Dorsolateral prefrontal cortex (tissue), 120 donors: ENCODE measurements at regions of chr12 and their contacts with region 1.

Region 1: GRCh38 chr12:32679091-32679919 is at the start of gene DNM1L:
- DNase-seq: peak; percentile 86 to 98 (median 94)
- H3K4me3 ChIP-seq: peak within 1 kb of the TSS; percentile 67 to 98 (median 88)
- H3K27ac ChIP-seq: peak within 1 kb of the TSS; percentile 65 to 99 (median 94)
- H3K27me3 ChIP-seq: no peaks in the 10 kb centered on the region
- CTCF ChIP-seq: peak in 46 of 56 donors; percentile 12 to 60 (median 44)
- total RNA-seq, gene DNM1L: 72.9 to 202 (median 157) TPM

Region 2: GRCh38 chr12:31728917-31729640 is 950.2 kb before region 1 on chr12 and contains the start of gene AMN1:
- intact Hi-C with region 1: loop called in 1 of 2 experiments (anchors 10 kb)
- DNase-seq: peak; percentile 98 to 99 (median 99)
- H3K4me3 ChIP-seq: peak within 1 kb of the TSS; percentile 65 to 97 (median 80)
- H3K27ac ChIP-seq: peak within 1 kb of the TSS; percentile 78 to 98 (median 93)
- H3K27me3 ChIP-seq: no peaks in the 10 kb centered on the region
- CTCF ChIP-seq: peak in 45 of 56 donors; percentile 6 to 60 (median 37)
- total RNA-seq, gene AMN1: 29.1 to 65.1 (median 46.0) TPM

Region 3: DNA sequence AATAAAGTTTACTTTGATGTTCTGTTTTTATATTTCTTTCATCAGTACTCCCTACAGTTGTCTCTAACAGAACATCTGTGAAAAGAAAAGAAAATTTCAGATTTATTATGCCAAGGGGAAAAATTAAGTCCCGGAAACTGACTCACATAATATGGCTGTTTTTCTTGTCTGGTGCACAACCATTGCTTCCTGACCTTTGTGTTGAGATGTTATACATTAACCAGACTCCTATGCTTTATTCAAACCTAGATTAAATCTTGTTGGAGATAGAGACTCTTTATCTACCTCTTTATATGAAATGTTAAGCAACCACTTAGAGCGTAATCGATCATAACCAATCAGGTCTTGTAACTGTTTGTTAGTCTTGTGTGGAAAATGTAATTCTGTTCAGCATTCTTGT is 610.2 kb before region 1 on chr12:
- intact Hi-C with region 1: loop called in 1 of 2 experiments (anchors 10 kb)
- DNase-seq: no peak
- H3K4me3 ChIP-seq: no peak overlapping the region
- H3K27ac ChIP-seq: no peak overlapping the region
- H3K27me3 ChIP-seq: no peaks in the 10 kb centered on the region
- CTCF ChIP-seq: no peak

Region 4: DNA sequence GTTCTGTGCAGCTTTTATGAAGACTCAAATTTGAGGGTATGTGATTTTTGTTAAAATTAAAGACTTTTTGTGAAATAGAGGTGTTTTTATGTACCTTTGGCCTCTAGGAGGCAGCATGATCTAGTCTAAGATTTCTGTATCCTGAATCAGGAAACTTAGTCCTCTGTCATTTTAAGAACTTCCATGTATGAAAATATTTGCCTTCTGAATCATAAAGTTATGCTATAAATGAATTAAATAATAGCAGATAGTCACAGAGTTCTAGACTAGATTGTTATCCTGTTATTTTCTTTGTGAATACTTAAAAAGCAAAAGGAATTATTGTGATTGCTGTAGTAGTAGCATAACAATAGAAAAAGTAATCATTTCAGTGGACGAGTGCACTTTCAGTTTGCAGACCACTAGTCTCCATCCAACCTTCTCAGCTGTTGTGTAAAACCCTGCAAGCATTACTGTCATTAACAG is 223.7 kb before region 1 on chr12:
- intact Hi-C with region 1: loop called in 1 of 2 experiments (anchors 5 kb)
- DNase-seq: no peak
- H3K4me3 ChIP-seq: peak overlapping the region in 58 of 59 donors; percentile 13 to 72 (median 47)
- H3K27ac ChIP-seq: peak overlapping the region in 37 of 59 donors; percentile 3 to 73 (median 37)
- H3K27me3 ChIP-seq: no peaks in the 10 kb centered on the region
- CTCF ChIP-seq: peak; percentile 55 to 95 (median 81)

Region 5: GRCh38 chr12:32821710-32822109 is 142.4 kb after region 1 on chr12:
- intact Hi-C with region 1: no loop called
- DNase-seq: no peak
- H3K4me3 ChIP-seq: no peak overlapping the region
- H3K27ac ChIP-seq: peak overlapping the region in 19 of 59 donors; percentile 6 to 64 (median 38)
- H3K27me3 ChIP-seq: no peaks in the 10 kb centered on the region
- CTCF ChIP-seq: no peak

Region 6: GRCh38 chr12:34022079-34022830 is 1343.0 kb after region 1 on chr12 and contains the start of gene ALG10:
- intact Hi-C with region 1: loop called (anchors 5 to 10 kb)
- DNase-seq: peak; percentile 86 to 97 (median 95)
- H3K4me3 ChIP-seq: peak within 1 kb of the TSS; percentile 62 to 94 (median 79)
- H3K27ac ChIP-seq: peak within 1 kb of the TSS; percentile 43 to 97 (median 86)
- H3K27me3 ChIP-seq: no peaks in the 10 kb centered on the region
- CTCF ChIP-seq: peak; percentile 70 to 95 (median 84)
- total RNA-seq, gene ALG10: 4.6 to 13.9 (median 8.1) TPM